Gastrocnemius medialis (tissue), 4 donors: ENCODE measurements at regions of chr20 and their contacts with region 1.

Region 1: GRCh38 chr20:35092524-35093266 is at the start of gene TRPC4AP:
- DNase-seq: peak; percentile 78 to 87
- ATAC-seq: peak; percentile 91 to 92
- H3K4me3 ChIP-seq: peak within 1 kb of the TSS; percentile 71 to 95 (median 80)
- H3K27ac ChIP-seq: peak within 1 kb of the TSS; percentile 87 to 99 (median 94)
- H3K4me1 ChIP-seq: peaks cover 36 to 41% of the 10 kb centered on the region in 2 donors
- H3K27me3 ChIP-seq: no peaks in the 10 kb centered on the region
- CTCF ChIP-seq: peak; percentile 94 to 99 (median 99)
- POLR2A ChIP-seq: peak; percentile 86 to 91
- total RNA-seq, gene TRPC4AP: 58.4 to 67.4 (median 63.5) TPM

Region 2: GRCh38 chr20:34825530-34826362 is 266.9 kb before region 1 on chr20 and contains the start of gene NCOA6:
- in situ Hi-C with region 1: no loop called
- intact Hi-C with region 1: loop called (anchors 5 kb)
- DNase-seq: peak; percentile 86 to 90
- ATAC-seq: peak; percentile 81 to 86
- H3K4me3 ChIP-seq: peak within 1 kb of the TSS; percentile 76 to 93 (median 88)
- H3K27ac ChIP-seq: peak within 1 kb of the TSS; percentile 84 to 97 (median 94)
- H3K4me1 ChIP-seq: peaks cover 31 to 33% of the 10 kb centered on the region in 2 donors
- H3K27me3 ChIP-seq: no peaks in the 10 kb centered on the region
- CTCF ChIP-seq: no peak
- POLR2A ChIP-seq: peak in 1 of 2 donors; percentile 71
- total RNA-seq, gene NCOA6: 10.9 to 12.7 (median 11.6) TPM

Region 3: GRCh38 chr20:34955232-34956040 is 137.3 kb before region 1 on chr20 and contains the starts of genes GSS and MYH7B:
- in situ Hi-C with region 1: no loop called
- intact Hi-C with region 1: loop called (anchors 10 kb)
- DNase-seq: peak; percentile 94 to 97
- ATAC-seq: peak; percentile 80 to 88
- H3K4me3 ChIP-seq: peak within 1 kb of the TSS; percentile 58 to 97 (median 80)
- H3K27ac ChIP-seq: peak within 1 kb of the TSS; percentile 83 to 98 (median 91)
- H3K4me1 ChIP-seq: peaks cover 27 to 53% of the 10 kb centered on the region in 2 donors
- H3K27me3 ChIP-seq: no peaks in the 10 kb centered on the region
- CTCF ChIP-seq: peak; percentile 53 to 74 (median 64)
- POLR2A ChIP-seq: peak; percentile 79 to 91
- total RNA-seq, gene GSS: 14.1 to 33.0 (median 23.8) TPM
- total RNA-seq, gene MYH7B: 1.6 to 8.5 (median 3.3) TPM

Region 4: GRCh38 chr20:35049776-35050352 is 42.8 kb before region 1 on chr20:
- in situ Hi-C with region 1: no loop called
- intact Hi-C with region 1: no loop called
- DNase-seq: no peak
- ATAC-seq: no peak
- H3K4me3 ChIP-seq: no peak overlapping the region
- H3K27ac ChIP-seq: no peak overlapping the region
- H3K4me1 ChIP-seq: peaks cover 6 to 7% of the 10 kb centered on the region in 2 donors
- H3K27me3 ChIP-seq: no peaks in the 10 kb centered on the region
- CTCF ChIP-seq: no peak
- POLR2A ChIP-seq: no peak

Region 5: DNA sequence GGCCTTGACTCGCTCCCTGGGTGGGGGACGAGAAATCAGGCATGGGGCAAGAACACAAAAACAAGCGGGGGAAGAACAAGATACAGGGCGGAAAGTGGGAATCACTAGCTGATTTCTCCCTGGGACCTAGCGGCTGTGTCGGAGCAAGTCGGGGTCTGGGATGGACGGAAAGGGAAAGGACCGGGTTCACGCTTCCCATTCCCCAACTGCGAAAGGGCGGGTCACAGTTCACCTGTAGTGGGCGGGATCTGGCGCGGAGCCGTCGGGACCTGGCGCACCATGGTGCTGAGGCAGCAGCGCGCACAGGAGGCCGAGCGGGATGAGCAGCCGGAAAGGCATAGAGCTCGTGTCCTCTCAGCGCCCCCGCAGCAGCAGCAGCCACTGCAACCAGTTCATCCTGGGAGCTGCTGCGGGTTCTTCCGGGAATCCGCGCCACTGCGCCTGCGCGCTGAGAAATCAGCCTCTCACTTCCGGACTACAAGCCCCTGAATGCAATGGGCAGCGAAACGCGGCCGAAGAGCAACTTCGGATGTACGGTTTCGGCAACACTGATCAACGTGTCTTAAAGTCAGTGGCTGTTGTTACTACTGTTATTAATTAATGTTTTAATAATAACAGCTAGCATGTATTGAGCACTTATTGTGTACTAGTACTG is 54.4 kb after region 1 on chr20 and contains the start of gene EDEM2:
- in situ Hi-C with region 1: no loop called
- intact Hi-C with region 1: loop called (anchors 5 kb)
- DNase-seq: peak; percentile 87 to 91
- ATAC-seq: peak; percentile 95 to 96
- H3K4me3 ChIP-seq: peak within 1 kb of the TSS; percentile 74 to 84 (median 76)
- H3K27ac ChIP-seq: peak within 1 kb of the TSS; percentile 65 to 79 (median 72)
- H3K4me1 ChIP-seq: peaks cover 4 to 22% of the 10 kb centered on the region in 2 donors
- H3K27me3 ChIP-seq: no peaks in the 10 kb centered on the region
- CTCF ChIP-seq: peak in 1 of 5 experiments; percentile 10
- POLR2A ChIP-seq: peak; percentile 35 to 39
- total RNA-seq, gene EDEM2: 7.2 to 12.2 (median 9.5) TPM

Region 6: GRCh38 chr20:35192111-35192872 is 99.6 kb after region 1 on chr20:
- in situ Hi-C with region 1: no loop called
- intact Hi-C with region 1: no loop called
- DNase-seq: no peak
- ATAC-seq: no peak
- H3K4me3 ChIP-seq: no peak overlapping the region
- H3K27ac ChIP-seq: no peak overlapping the region
- H3K4me1 ChIP-seq: no peaks in the 10 kb centered on the region
- H3K27me3 ChIP-seq: no peaks in the 10 kb centered on the region
- CTCF ChIP-seq: no peak
- POLR2A ChIP-seq: no peak